Gastrocnemius medialis (tissue), 4 donors: ENCODE measurements at regions of chr15 and their contacts with region 1.

Region 1: GRCh38 chr15:41989259-41989933 is 17.0 kb upstream of the EHD4 start:
- DNase-seq: peak; percentile 63 to 74
- ATAC-seq: peak; percentile 86 to 93
- H3K4me3 ChIP-seq: no peak overlapping the region
- H3K27ac ChIP-seq: no peak overlapping the region
- H3K4me1 ChIP-seq: peaks cover 0 to 9% of the 10 kb centered on the region in 2 donors
- H3K27me3 ChIP-seq: no peaks in the 10 kb centered on the region
- CTCF ChIP-seq: peak; percentile 95 to 99 (median 98)
- POLR2A ChIP-seq: no peak

Region 2: DNA sequence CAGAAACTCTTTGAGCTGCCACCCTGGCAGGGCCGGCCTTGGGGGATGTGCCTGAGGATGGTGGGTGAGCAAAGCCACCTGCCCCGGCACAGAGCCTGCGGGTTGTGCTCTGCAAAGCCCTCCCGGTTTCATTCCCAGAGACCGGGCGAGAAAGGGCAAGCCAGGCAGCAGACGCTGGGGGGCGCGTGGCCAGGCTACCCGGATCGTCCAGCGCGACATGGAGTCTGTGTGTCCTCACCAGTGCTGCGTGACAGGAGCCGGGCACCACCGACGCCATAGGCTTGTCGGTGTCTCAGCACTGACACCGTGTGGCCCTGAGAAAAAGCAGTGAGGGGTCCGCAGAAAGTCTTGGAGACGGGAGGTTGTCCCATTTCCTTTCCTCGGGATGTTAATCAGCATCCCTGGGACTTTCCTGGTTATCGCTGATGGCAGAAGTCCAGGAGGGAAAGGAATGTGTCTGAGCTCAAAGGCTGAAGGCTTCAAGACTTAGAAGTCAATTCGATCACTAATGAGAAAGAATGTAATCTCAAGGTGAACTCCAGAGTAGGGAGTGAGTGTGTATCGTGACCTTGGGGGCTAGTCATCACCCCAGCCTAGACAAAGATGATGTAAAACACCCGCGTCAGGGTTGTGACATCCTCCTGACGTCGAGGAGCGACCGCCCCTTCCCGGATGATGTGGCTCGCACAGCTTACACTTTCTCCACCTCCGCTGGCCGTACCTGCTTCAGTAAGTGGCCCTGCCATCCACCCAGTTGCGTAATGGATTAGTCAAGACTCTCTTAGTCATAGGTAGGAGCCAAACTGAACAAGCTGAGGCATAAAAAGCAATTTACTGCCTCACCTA is 67.8 kb after region 1 on chr15:
- in situ Hi-C with region 1: loop called in 3 of 4 experiments (anchors 5 to 10 kb)
- intact Hi-C with region 1: loop called (anchors 1 kb)
- DNase-seq: peak; percentile 58 to 80
- ATAC-seq: peak; percentile 67 to 78
- H3K4me3 ChIP-seq: peak overlapping the region; percentile 28 to 45 (median 36)
- H3K27ac ChIP-seq: peak overlapping the region; percentile 32 to 61 (median 56)
- H3K4me1 ChIP-seq: peaks cover 32 to 36% of the 10 kb centered on the region in 2 donors
- H3K27me3 ChIP-seq: no peaks in the 10 kb centered on the region
- CTCF ChIP-seq: peak; percentile 65 to 81 (median 76)
- POLR2A ChIP-seq: no peak

Region 3: DNA sequence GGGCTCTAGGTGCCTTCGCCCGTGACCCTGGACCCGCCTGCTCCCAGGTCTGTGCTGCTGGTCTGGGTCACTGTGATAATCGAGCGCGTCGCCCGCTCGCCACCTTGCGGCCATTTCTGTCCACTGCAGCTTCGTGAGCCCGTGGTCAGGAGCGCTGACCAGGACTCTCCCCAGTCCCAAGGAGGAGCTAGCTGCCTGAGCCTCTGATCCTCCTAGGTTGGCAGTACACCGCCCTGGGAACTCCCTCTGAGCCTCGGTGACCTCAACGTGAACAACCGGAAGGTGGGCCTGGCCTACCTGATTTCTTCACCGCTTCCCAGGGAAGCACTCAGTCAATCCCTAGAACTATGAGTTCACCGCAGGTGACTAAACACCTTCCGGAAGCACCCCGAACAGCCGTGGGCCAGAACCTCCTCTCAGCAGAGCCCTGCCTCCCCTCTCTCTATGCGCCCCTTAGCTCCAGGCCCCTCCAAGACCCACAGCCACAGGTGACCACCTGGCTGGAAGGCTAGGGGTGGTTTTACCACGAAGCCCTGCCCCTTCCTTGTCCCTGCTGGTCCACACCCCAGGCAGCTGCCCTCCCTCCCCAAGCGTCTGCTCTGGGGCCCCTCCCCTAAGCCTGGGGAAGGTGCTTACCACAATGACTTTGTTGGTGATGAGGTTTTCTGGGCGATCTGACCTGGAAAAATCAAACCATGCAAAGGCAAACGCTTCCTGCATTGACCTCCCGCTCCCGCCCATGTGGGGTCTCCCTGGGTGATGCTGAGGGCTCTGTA is 95.3 kb after region 1 on chr15:
- in situ Hi-C with region 1: no loop called
- intact Hi-C with region 1: loop called (anchors 1 kb)
- DNase-seq: peak; percentile 26 to 40
- ATAC-seq: peak; percentile 84 to 95
- H3K4me3 ChIP-seq: no peak overlapping the region
- H3K27ac ChIP-seq: no peak overlapping the region
- H3K4me1 ChIP-seq: peaks cover 0 to 6% of the 10 kb centered on the region in 2 donors
- H3K27me3 ChIP-seq: no peaks in the 10 kb centered on the region
- CTCF ChIP-seq: peak; percentile 61 to 96 (median 90)
- POLR2A ChIP-seq: no peak

Region 4: DNA sequence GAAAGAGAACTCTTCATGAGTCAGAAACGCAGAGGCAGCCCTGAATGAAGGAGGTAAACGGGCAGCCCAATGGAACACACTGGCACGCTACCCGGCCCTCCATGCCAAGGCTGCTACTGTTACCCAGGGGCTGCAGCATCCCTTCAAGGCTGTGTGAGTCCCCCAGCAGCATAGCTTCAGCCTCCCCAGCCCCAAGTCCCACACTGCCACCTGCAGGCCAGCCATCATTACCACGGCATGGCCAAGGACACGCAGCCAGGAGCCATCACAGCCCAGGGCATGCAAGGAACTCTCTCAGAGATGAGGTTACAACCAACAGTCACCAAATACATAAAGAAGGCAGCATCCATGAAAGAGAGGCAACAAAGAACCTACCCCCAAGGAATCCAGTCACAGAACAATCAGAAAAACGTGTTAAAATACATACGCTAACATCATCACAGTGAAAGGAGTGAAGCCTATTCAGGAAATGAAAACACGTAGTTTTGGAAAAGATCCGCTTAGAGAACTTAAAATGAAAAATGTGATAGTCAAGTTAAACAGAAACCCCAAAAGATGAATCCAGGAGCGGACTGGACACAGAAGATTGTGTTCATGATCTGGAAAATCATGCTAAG is 144.6 kb after region 1 on chr15:
- in situ Hi-C with region 1: no loop called
- intact Hi-C with region 1: loop called (anchors 5 kb)
- DNase-seq: no peak
- ATAC-seq: peak in 1 of 2 donors; percentile 52
- H3K4me3 ChIP-seq: no peak overlapping the region
- H3K27ac ChIP-seq: no peak overlapping the region
- H3K4me1 ChIP-seq: no peaks in the 10 kb centered on the region
- H3K27me3 ChIP-seq: no peaks in the 10 kb centered on the region
- CTCF ChIP-seq: peak in 3 of 5 experiments; percentile 51 to 68 (median 57)
- POLR2A ChIP-seq: no peak